Panc1 (cell line): ENCODE measurements at regions of chr7 and their contacts with region 1.

Region 1: DNA sequence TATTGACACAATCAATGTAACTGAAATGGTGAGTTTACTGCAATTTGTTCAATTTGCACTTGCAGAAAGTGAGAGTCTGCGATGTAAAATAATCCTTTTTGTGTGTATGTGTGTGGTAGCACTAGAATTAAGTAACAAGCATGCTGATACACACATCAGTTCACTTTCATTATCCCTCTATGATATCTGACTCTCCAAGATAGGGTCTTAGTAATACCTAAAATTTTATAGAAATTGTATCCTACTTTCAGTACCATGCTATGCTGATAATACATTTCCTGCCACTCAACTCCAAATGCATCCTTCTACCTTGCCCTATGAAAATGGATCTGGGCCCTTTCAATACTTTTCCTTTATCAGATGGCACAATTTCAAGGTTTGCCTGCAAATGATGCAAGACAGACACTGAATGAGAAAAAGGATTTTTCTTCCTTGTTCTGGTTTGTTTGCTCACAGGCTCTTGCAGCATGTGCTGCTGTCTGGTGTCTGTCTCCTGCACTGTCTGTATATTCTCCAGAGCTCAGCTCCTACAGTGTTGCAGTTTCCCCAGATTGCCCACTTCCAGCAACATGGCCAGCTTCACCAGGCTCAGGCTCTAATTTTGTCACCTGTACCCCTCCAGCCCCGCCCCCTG is 297.9 kb upstream of the HGF start:
- DNase-seq: no peak
- ATAC-seq: no peak
- H3K4me3 ChIP-seq: no peak overlapping the region
- H3K27ac ChIP-seq: no peak overlapping the region
- H3K4me1 ChIP-seq: no peaks in the 10 kb centered on the region
- H3K27me3 ChIP-seq: no peaks in the 10 kb centered on the region
- CTCF ChIP-seq: no peak

Region 2: GRCh38 chr7:82156168-82156567 is 88.4 kb after region 1 on chr7:
- CTCF ChIA-PET with region 1: no interaction called
- POLR2A ChIA-PET with region 1: interaction called, 14 read pairs
- in situ Hi-C with region 1: no loop called
- intact Hi-C with region 1: no loop called
- DNase-seq: peak; percentile 33
- ATAC-seq: peak; percentile 72
- H3K4me3 ChIP-seq: no peak overlapping the region
- H3K27ac ChIP-seq: no peak overlapping the region
- H3K4me1 ChIP-seq: peaks cover 3% of the 10 kb centered on the region; the same call in 1 of the 2 replicates
- H3K27me3 ChIP-seq: no peaks in the 10 kb centered on the region
- CTCF ChIP-seq: no peak

Region 3: GRCh38 chr7:82605247-82605872 is 537.6 kb after region 1 on chr7:
- CTCF ChIA-PET with region 1: no interaction called
- POLR2A ChIA-PET with region 1: no interaction called
- in situ Hi-C with region 1: no loop called
- intact Hi-C with region 1: no loop called
- DNase-seq: no peak
- ATAC-seq: no peak
- H3K4me3 ChIP-seq: no peak overlapping the region
- H3K27ac ChIP-seq: no peak overlapping the region
- H3K4me1 ChIP-seq: no peaks in the 10 kb centered on the region
- H3K27me3 ChIP-seq: no peaks in the 10 kb centered on the region
- CTCF ChIP-seq: peak; percentile 79